ENCODE measurements at regions of chr6 and their contacts with region 1.

Region 1: GRCh38 chr6:31580807-31581433 is 1.3 kb downstream of the LTB start:
- DNase-seq: peak; percentile 87
- H3K4me3 ChIP-seq: peak overlapping the region; percentile 56 to 71 (median 70)
- H3K27ac ChIP-seq: peak overlapping the region; percentile 55
- H3K4me1 ChIP-seq: peaks cover 16% of the 10 kb centered on the region
- H3K27me3 ChIP-seq: no peaks in the 10 kb centered on the region
- CTCF ChIP-seq: peak; percentile 99
- POLR2A ChIP-seq: peak; percentile 37

Region 2: GRCh38 chr6:31541658-31542521 is 39.0 kb before region 1 on chr6 and contains the start of gene DDX39B:
- CTCF ChIA-PET with region 1: interaction called, 1,517 read pairs
- POLR2A ChIA-PET with region 1: no interaction called
- dilution Hi-C with region 1: no loop called
- intact Hi-C with region 1: no loop called
- DNase-seq: peak; percentile 97
- H3K4me3 ChIP-seq: peak within 1 kb of the TSS; percentile 59 to 95 (median 80)
- H3K27ac ChIP-seq: peak within 1 kb of the TSS; percentile 85
- H3K4me1 ChIP-seq: peaks cover 28% of the 10 kb centered on the region
- H3K27me3 ChIP-seq: no peaks in the 10 kb centered on the region
- CTCF ChIP-seq: no peak
- POLR2A ChIP-seq: peak; percentile 96
- total RNA-seq, gene DDX39B: 453 and 481 TPM in 2 replicates

Region 3: DNA sequence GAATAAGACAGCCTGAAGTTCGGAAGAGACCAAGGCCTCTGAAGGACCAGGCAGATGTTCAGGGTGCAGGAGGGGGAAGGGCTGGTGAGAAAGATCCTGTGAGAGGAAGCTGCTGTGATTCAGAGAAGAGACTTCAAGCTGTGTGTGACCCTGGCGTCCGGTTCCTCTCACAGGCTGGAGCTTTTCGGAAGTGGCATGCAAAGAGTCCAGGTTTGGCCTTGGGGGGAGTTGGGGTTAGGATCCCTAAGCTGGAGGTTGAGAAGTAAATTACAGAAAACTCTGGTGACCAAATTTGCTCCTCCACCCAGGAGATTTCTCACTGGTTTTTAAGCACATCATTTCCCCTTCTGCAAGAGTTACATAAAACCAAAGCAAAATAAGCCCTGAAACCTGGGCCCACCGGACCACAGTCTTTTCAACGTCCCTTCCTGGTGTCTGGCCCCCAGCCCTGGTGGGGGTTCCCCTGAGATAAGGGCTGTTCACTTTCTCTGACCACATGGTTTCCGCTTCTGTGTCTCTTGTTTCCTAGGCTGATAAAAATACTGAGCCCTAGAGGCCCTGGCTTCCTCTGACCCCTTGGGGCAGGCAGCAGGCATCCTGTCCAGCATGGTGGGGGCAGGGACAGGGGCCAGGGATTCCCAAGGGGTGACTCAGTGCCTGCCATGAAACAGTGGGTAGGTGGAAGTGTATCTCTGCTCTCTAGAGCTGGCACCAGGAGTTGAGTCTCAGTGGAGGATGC is 20.8 kb before region 1 on chr6:
- CTCF ChIA-PET with region 1: interaction called, 1,517 read pairs
- POLR2A ChIA-PET with region 1: interaction called, 5 read pairs
- dilution Hi-C with region 1: no loop called
- intact Hi-C with region 1: loop called (anchors 1 kb)
- DNase-seq: peak; percentile 99
- H3K4me3 ChIP-seq: peak overlapping the region in 1 of 3 experiments; percentile 29
- H3K27ac ChIP-seq: peak overlapping the region; percentile 98
- H3K4me1 ChIP-seq: peaks cover 69% of the 10 kb centered on the region
- H3K27me3 ChIP-seq: no peaks in the 10 kb centered on the region
- CTCF ChIP-seq: no peak
- POLR2A ChIP-seq: peak; percentile 71

Region 4: DNA sequence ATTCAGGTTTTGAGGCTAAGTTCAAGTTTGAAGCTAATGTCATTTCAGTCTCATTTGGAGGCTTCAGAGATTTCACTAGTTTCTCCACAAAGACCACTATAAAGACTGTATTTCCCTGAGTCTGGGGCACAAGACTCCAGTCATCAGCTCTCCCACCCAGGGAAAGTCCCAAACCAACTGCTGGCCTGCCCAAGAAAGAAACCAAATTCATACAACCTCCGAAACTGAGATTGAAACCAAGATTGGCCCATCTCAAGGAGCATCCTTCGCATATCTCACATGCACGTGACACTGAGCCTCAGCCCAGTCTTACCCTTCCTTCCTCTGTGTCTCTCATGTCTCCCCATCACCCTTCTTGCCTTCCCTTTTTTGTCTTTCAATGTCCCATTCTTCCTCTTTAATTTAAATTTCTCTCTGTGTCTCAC is 12.4 kb before region 1 on chr6:
- CTCF ChIA-PET with region 1: interaction called, 1,517 read pairs
- POLR2A ChIA-PET with region 1: no interaction called
- dilution Hi-C with region 1: no loop called
- intact Hi-C with region 1: loop called (anchors 1 kb)
- DNase-seq: no peak
- H3K4me3 ChIP-seq: no peak overlapping the region
- H3K27ac ChIP-seq: no peak overlapping the region
- H3K4me1 ChIP-seq: peaks cover 5% of the 10 kb centered on the region
- H3K27me3 ChIP-seq: no peaks in the 10 kb centered on the region
- CTCF ChIP-seq: no peak
- POLR2A ChIP-seq: no peak

Region 5: GRCh38 chr6:31597006-31597405 is 16.1 kb after region 1 on chr6:
- CTCF ChIA-PET with region 1: interaction called, 286 read pairs
- POLR2A ChIA-PET with region 1: no interaction called
- dilution Hi-C with region 1: no loop called
- intact Hi-C with region 1: loop called (anchors 1 kb)
- DNase-seq: peak; percentile 67
- H3K4me3 ChIP-seq: no peak overlapping the region
- H3K27ac ChIP-seq: no peak overlapping the region
- H3K4me1 ChIP-seq: no peaks in the 10 kb centered on the region
- H3K27me3 ChIP-seq: no peaks in the 10 kb centered on the region
- CTCF ChIP-seq: peak; percentile 43 to 47
- POLR2A ChIP-seq: no peak